Kidney (tissue), 22 donors: ENCODE measurements at regions of chr4 and their contacts with region 1.

Region 1: DNA sequence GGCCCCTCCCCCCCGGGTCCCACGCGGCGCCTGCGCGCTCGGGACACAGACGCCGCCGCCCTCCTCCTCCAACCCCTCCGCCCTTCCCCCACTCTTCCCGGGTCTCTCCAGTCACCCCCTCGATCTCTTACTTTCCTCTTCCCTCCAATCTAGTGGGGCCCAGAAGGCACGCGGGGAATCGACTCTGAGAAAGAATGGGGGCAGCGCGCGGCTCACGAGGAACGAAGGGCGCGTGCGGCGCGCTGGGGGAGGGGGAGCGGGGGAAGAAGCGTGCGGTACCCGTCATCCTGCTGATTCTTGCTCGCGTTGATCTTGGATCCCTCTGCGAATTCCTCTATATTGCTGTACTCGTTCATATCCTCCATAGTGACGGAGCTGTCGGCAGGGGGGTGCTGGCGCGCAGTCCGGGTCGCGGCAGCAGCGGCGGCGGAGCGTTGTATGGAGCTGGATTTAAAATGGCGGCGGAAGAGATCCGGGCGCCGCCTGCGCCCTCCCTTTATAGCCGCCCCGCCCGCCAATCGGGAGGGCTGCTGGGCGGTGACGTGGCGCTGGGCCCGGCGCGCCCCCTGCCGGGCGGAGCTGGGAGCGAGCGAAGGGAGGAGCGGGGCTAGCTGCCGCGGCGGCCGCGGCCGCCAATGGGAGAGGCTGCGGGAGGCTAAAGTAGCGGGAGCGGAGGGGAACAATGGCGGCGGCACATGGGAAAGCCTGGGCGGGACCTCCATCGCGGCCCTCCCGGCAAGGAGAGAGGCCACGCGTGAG is 1.1 kb downstream of the HNRNPDL start:
- DNase-seq: peak; percentile 95 to 98 (median 97)
- H3K4me3 ChIP-seq: peak overlapping the region; percentile 98 to 99 (median 99)
- H3K27ac ChIP-seq: peak overlapping the region; percentile 97 to 100
- H3K4me1 ChIP-seq: peaks cover 0 to 19% (median 12%) of the 10 kb centered on the region in 3 donors
- H3K27me3 ChIP-seq: no peaks in the 10 kb centered on the region
- CTCF ChIP-seq: peak; percentile 92

Region 2: GRCh38 chr4:82373816-82374625 is 55.1 kb before region 1 on chr4 and contains the start of gene HNRNPD:
- intact Hi-C with region 1: loop called (anchors 10 kb)
- DNase-seq: peak; percentile 99 to 100 (median 100)
- H3K4me3 ChIP-seq: peak within 1 kb of the TSS; percentile 96 to 99 (median 98)
- H3K27ac ChIP-seq: peak within 1 kb of the TSS; percentile 99 to 100
- H3K4me1 ChIP-seq: peaks cover 0 to 12% (median 11%) of the 10 kb centered on the region in 3 donors
- H3K27me3 ChIP-seq: no peaks in the 10 kb centered on the region
- CTCF ChIP-seq: no peak
- total RNA-seq, gene HNRNPD: 177 TPM

Region 3: DNA sequence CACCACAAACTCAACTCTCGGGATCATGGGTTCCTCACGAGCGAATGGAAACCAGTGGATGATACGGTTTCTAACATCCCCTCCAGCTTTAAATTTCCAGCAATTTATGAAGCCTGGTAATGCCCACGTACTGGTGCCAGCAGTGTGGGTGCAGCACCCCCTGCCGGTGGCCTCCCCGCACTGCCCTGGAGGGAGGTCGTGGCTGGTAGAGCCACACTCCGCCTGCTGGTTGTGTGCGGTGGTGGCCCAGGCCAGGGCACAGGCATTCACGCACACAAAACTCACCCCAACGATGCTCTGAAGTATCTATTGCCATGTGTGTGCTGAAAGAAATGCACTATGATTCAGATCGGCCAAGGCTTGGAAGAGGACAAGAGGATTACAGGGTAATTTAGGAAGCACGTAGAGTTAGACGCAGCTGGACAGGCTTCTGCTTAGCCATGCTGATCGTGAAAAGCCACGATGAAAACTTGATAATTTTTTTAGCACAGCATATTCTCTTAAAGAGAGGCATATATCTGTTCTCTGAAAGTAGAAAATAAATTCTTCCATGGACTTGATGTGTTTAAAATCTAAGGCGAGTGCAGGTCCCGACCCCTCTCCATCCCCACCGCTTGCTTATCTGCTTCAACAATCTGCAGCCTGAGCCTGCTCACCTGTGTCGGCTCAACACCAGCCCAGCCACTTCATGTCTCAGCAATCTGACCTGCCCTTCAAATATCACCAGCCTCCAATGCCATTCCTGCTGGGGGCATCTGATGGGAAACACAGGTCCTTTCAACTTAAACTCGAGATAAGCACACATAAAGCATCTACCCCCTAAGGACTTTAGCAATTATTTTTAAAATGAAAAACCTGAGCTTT is 310.4 kb after region 1 on chr4:
- intact Hi-C with region 1: no loop called
- DNase-seq: peak; percentile 77 to 85 (median 78)
- H3K4me3 ChIP-seq: no peak overlapping the region
- H3K27ac ChIP-seq: peak overlapping the region in 1 of 2 donors; percentile 1
- H3K4me1 ChIP-seq: peaks cover 0 to 4% (median 0%) of the 10 kb centered on the region in 3 donors
- H3K27me3 ChIP-seq: no peaks in the 10 kb centered on the region
- CTCF ChIP-seq: peak; percentile 94

Region 4: GRCh38 chr4:83097018-83097417 is 667.9 kb after region 1 on chr4:
- intact Hi-C with region 1: no loop called
- DNase-seq: no peak
- H3K4me3 ChIP-seq: no peak overlapping the region
- H3K27ac ChIP-seq: no peak overlapping the region
- H3K4me1 ChIP-seq: no peaks in the 10 kb centered on the region
- H3K27me3 ChIP-seq: no peaks in the 10 kb centered on the region
- CTCF ChIP-seq: no peak